A549 (cell line): ENCODE measurements at regions of chr12 and their contacts with region 1.

Region 1: DNA sequence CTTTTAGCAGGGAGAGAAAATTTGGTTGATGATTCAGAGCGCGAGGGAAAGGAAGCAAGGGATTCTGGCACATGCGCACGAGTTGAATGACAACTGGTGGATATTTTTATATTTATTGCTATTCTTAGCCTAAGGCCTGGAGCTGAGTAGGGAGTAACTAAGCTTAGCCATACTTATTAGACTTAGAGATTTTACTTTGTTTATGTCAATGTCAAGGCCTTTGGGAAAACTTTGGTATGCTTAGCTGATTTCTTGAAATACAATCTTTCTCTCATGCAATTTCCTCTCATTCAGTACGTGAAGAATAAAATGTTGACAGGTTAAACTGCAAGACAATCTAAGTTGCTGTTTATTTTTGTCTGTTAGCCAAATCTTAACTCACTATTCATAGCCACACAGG is 101.1 kb downstream of the CRADD start:
- DNase-seq: no peak
- ATAC-seq: no peak
- H3K4me3 ChIP-seq: no peak overlapping the region
- H3K27ac ChIP-seq: no peak overlapping the region
- H3K4me1 ChIP-seq: peaks cover 18% of the 10 kb centered on the region
- CTCF ChIP-seq: no peak
- EP300 ChIP-seq: no peak
- POLR2A ChIP-seq: no peak
- RAD21 ChIP-seq: no peak

Region 2: GRCh38 chr12:93766796-93767523 is 11.3 kb before region 1 on chr12:
- CTCF ChIA-PET with region 1: interaction called, 11 read pairs
- POLR2A ChIA-PET with region 1: no interaction called
- DNase-seq: peak; percentile 53 to 66
- ATAC-seq: peak; percentile 83 to 93
- H3K4me3 ChIP-seq: no peak overlapping the region
- H3K27ac ChIP-seq: peak overlapping the region; percentile 29 to 58; a peak in 4 of 6 replicates
- H3K4me1 ChIP-seq: peaks cover 15% of the 10 kb centered on the region
- CTCF ChIP-seq: peak; percentile 82
- EP300 ChIP-seq: no peak
- POLR2A ChIP-seq: no peak
- RAD21 ChIP-seq: peak; percentile 89 to 95